Esophagus muscularis mucosa (tissue), 4 donors: ENCODE measurements at regions of chr2 and their contacts with region 1.

Region 1: GRCh38 chr2:106582148-106583143 is 95.3 kb downstream of the CD8B2 start:
- DNase-seq: peak; percentile 92
- H3K4me3 ChIP-seq: peak overlapping the region; percentile 37 to 52 (median 41)
- H3K27ac ChIP-seq: no peak overlapping the region
- H3K4me1 ChIP-seq: peaks cover 9 to 18% (median 14%) of the 10 kb centered on the region in 4 donors
- H3K27me3 ChIP-seq: peaks cover 0 to 28% (median 12%) of the 10 kb centered on the region in 4 donors
- CTCF ChIP-seq: peak; percentile 76 to 83 (median 80)
- EP300 ChIP-seq: no peak
- POLR2A ChIP-seq: no peak

Region 2: DNA sequence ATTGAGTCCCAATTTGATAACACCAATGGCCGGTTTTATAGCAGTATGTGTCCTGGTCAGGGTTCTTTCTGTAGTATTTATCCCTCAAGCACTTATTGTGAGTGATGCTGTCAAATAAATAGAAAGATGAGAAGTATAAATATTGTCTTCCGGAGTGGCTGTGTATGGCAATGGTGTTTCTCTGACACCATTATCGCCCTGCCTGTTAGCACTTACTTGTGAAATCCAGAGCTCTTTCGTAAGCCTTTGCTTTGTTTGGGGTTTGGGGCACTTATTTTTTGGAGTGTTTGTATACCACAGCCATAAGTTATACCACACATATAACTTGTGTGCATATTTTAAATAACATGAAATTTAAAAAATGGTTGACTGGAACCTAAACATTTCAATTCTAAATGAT is 66.0 kb before region 1 on chr2:
- intact Hi-C with region 1: loop called (anchors 2 kb)
- DNase-seq: no peak
- H3K4me3 ChIP-seq: no peak overlapping the region
- H3K27ac ChIP-seq: no peak overlapping the region
- H3K4me1 ChIP-seq: peaks cover 0 to 8% (median 3%) of the 10 kb centered on the region in 4 donors
- H3K27me3 ChIP-seq: no peaks in the 10 kb centered on the region
- CTCF ChIP-seq: no peak
- EP300 ChIP-seq: no peak
- POLR2A ChIP-seq: no peak

Region 3: GRCh38 chr2:106542811-106543259 is 39.6 kb before region 1 on chr2:
- intact Hi-C with region 1: loop called (anchors 2 kb)
- DNase-seq: no peak
- H3K4me3 ChIP-seq: peak overlapping the region; percentile 19 to 31 (median 26)
- H3K27ac ChIP-seq: no peak overlapping the region
- H3K4me1 ChIP-seq: peaks cover 0 to 10% (median 5%) of the 10 kb centered on the region in 4 donors
- H3K27me3 ChIP-seq: peaks cover 0 to 13% (median 0%) of the 10 kb centered on the region in 4 donors
- CTCF ChIP-seq: peak; percentile 84 to 94 (median 88)
- EP300 ChIP-seq: no peak
- POLR2A ChIP-seq: no peak